MCF 10A (cell line): ENCODE measurements at regions of chr19 and their contacts with region 1.

Region 1: GRCh38 chr19:10332955-10333757 is at the start of gene RAVER1:
- DNase-seq: peak; percentile 98
- H3K4me3 Mint-ChIP-seq: peak within 1 kb of the TSS; percentile 95
- H3K27ac Mint-ChIP-seq: peak within 1 kb of the TSS; percentile 89
- H3K4me1 Mint-ChIP-seq: no peaks in the 10 kb centered on the region
- H3K27me3 Mint-ChIP-seq: no peaks in the 10 kb centered on the region
- CTCF ChIP-seq: no peak
- total RNA-seq, gene RAVER1: 31.5 and 36.1 TPM in 2 replicates

Region 2: GRCh38 chr19:10173257-10173926 is 159.8 kb before region 1 on chr19:
- CTCF ChIA-PET with region 1: no interaction called
- POLR2A ChIA-PET with region 1: no interaction called
- intact Hi-C with region 1: no loop called
- DNase-seq: peak; percentile 50
- H3K4me3 Mint-ChIP-seq: no peak overlapping the region
- H3K27ac Mint-ChIP-seq: peak overlapping the region; percentile 83
- H3K4me1 Mint-ChIP-seq: peaks cover 5% of the 10 kb centered on the region
- H3K27me3 Mint-ChIP-seq: no peaks in the 10 kb centered on the region
- CTCF ChIP-seq: no peak

Region 3: DNA sequence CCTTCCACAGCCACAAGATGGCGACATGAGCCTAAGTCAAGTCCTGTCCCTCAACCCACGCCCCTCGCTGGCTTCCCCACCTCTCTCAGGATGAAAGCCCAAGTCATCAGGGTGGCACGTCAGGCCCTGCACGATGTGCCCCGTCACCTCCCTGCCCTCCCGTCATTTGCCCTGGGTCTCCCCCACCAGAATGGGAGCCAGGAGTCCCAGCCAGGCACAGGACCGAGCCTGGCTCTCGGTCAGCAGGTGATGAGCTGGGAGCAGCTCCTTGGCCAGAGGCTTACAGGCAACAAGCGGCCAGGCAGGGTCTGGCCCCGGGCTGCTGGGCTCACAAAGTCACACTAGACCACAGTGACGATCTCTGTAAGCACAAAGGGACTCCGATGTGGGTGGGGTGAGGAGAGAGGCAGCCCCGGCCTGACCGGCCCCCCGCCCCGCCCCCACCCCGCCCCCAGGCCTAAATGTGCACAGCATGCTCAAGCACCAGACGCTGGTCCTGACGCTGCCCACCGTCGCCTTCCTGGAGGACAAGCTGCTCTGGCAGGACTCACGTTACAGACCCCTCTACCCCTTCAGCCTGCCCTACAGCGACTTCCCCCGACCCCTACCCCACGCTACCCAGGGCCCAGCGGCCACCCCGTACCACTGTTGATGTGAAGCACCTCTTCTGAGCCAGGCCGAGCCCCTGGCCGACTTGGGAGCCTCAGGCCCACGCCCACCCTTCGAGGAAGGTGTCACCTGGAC is 73.8 kb before region 1 on chr19:
- CTCF ChIA-PET with region 1: interaction called, 14 read pairs
- POLR2A ChIA-PET with region 1: interaction called, 23 read pairs
- intact Hi-C with region 1: no loop called
- DNase-seq: peak; percentile 92
- H3K4me3 Mint-ChIP-seq: no peak overlapping the region
- H3K27ac Mint-ChIP-seq: no peak overlapping the region
- H3K4me1 Mint-ChIP-seq: no peaks in the 10 kb centered on the region
- H3K27me3 Mint-ChIP-seq: no peaks in the 10 kb centered on the region
- CTCF ChIP-seq: peak; percentile 70

Region 4: DNA sequence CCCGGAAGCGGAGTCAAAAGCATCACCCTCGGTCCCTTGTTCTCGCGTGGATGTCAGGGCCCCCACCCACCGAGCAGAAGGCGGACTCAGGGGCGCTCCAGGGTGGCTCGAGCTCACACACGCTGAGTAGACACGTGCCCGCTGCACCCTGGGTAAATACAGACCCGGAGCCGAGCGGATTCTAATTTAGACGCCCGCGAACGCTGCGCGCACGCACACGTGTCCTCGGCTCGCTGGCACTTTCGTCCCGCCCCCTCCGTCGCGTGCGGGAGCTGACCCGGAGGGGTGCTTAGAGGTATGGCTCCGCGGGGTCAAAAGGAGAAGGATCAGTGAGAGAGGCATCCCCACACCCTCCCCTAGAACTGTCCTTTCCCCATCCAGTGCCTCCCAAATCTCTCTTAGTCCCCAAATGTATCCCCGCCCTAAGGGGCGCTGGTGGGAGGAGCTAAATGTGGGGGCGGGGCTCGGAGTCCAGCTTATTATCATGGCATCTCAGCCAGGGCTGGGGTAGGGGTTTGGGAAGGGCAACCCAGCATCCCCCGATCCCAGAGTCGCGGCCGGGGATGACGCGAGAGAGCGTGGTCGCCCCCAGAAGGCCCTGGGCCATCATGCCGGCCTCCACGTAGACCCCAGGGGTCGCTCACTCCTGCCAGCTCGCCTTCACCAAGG is 43.9 kb before region 1 on chr19:
- CTCF ChIA-PET with region 1: interaction called, 4 read pairs
- POLR2A ChIA-PET with region 1: interaction called, 14 read pairs
- intact Hi-C with region 1: loop called (anchors 2 kb)
- DNase-seq: peak; percentile 79
- H3K4me3 Mint-ChIP-seq: peak overlapping the region; percentile 79
- H3K27ac Mint-ChIP-seq: peak overlapping the region; percentile 83
- H3K4me1 Mint-ChIP-seq: peaks cover 30% of the 10 kb centered on the region
- H3K27me3 Mint-ChIP-seq: no peaks in the 10 kb centered on the region
- CTCF ChIP-seq: no peak

Region 5: DNA sequence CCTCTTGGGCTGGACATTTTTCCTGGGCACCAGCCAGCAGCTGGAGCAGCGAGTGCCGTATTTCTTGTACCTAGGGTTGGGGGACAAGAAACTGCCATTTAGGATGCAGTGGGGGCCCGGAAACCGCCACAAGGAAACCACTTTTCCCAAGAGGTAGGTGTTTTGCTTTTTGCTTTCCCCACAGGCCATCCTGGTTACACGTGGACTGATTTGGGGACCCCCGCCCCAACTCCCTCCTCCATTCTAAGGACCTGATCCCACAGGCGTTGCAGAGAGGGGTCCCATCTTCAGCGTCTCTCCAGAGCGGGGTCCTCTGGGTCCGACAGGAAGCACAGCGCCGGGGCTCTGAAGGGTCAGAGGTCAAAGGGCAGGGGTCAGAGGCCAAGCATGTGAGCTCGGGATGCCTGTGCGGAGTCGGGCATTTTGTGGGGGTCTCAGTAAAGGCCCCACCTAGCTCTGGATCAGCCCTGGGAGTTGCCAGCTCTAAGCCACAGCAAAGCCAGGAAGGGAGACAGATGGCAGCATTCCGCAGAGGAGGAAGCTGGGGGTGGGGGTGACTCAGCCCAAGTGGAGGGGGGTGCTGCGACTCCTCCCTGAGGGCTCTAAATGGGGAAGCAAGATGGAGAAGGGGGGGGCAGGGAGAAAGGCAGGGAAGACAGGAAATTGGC is 27.9 kb before region 1 on chr19:
- CTCF ChIA-PET with region 1: no interaction called
- POLR2A ChIA-PET with region 1: no interaction called
- intact Hi-C with region 1: no loop called
- DNase-seq: no peak
- H3K4me3 Mint-ChIP-seq: no peak overlapping the region
- H3K27ac Mint-ChIP-seq: no peak overlapping the region
- H3K4me1 Mint-ChIP-seq: peaks cover 8% of the 10 kb centered on the region
- H3K27me3 Mint-ChIP-seq: no peaks in the 10 kb centered on the region
- CTCF ChIP-seq: no peak

Region 6: GRCh38 chr19:10346509-10346908 is 13.4 kb after region 1 on chr19:
- CTCF ChIA-PET with region 1: interaction called, 4 read pairs
- POLR2A ChIA-PET with region 1: interaction called, 22 read pairs
- intact Hi-C with region 1: no loop called
- DNase-seq: peak; percentile 66
- H3K4me3 Mint-ChIP-seq: no peak overlapping the region
- H3K27ac Mint-ChIP-seq: no peak overlapping the region
- H3K4me1 Mint-ChIP-seq: peaks cover 4% of the 10 kb centered on the region
- H3K27me3 Mint-ChIP-seq: no peaks in the 10 kb centered on the region
- CTCF ChIP-seq: no peak

Region 7: DNA sequence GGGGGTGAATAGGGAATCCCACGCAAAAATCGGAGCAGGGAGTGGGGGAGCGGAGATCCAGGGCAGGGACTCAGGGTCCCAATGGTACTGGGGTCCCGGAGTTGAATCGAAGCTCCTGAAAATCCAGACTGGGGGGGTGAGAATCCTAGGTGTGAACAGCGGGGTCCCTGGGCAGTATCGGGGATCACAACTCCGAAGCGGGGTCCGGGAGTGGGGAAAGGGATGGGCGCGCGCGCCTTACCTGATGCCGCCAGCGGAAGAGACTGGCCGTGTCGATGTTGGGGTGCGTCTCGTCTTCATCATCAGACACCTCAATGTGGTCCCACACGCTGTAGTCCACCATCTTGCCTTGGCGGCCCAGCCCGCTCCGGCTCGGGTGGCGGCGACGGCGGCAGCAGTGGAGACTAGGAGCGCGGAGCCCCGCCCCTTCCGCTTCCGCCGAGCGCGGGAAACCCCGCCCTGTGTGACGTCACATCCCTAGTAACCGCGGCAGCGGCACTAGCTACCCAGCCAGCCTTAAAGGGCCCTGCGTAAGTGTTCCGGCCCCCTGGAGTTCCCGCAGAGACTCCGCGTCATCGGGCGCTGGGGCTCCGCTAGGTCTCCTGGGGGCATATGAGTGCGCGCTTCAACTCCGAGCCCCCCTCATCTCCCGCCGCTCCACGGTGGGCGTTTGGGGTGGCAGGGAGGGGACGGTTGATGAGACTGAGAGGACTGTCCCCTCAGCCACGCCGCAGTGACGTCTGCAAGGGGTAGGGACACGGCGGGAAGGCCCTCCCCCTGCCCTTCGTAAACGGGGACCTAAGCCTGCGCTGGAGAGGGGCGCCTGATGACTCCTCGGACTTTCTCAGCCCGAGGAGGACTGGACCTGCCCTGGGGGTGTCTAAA is 70.2 kb after region 1 on chr19 and contains the start of gene CDC37:
- CTCF ChIA-PET with region 1: interaction called, 3 read pairs
- POLR2A ChIA-PET with region 1: interaction called, 17 read pairs
- intact Hi-C with region 1: no loop called
- DNase-seq: peak; percentile 97
- H3K4me3 Mint-ChIP-seq: peak within 1 kb of the TSS; percentile 99
- H3K27ac Mint-ChIP-seq: peak within 1 kb of the TSS; percentile 98
- H3K4me1 Mint-ChIP-seq: peaks cover 5% of the 10 kb centered on the region
- H3K27me3 Mint-ChIP-seq: peaks cover 11% of the 10 kb centered on the region
- CTCF ChIP-seq: no peak
- total RNA-seq, gene CDC37: 164 and 188 TPM in 2 replicates